HepG2 (cell line): ENCODE measurements at regions of chr11 and their contacts with region 1.

Region 1: DNA sequence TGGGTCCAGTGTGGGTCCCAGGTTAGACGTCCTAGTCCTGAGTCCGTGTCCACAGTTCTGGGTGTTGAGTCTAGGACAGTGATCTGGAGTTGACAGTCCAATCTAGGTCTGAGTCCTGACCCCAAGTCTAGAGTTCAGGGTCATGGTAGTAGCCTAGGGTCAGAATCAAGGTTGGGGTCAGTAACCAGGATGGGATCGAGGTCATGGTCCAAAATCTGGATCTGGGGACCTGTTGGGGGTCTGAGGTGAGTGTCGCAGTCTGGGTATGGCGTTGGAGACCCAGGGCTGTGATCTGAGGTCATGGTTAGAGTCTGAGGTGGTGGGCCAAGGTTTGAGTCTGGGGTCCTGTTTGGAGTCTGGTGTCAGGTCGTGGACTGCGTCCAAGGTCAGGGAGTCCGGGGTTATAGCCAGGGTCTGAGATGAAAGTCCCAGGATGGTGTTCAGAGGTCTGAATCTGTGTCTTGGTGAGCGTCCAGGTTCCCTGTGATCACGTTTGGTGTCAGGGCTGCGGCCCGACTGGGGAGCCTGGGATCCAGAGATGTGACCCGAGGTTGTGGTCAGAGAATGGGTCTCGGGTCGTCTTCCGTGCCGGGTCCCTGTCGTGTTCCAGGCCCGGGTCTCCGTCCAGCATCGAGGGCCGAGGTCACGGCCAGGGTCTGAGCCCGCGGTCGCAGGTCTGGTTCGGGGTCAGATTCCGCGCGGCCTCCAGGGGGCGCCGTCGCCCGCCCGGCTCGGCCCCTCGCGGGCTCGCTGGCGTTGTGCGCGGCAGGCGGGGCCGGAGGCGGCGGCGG is 445 bp upstream of the GRK2 start:
- DNase-seq: peak; percentile 44
- ATAC-seq: peak; percentile 51
- H3K4me3 ChIP-seq: peak overlapping the region; percentile 43 to 65 (median 49); a peak in 5 of 6 replicates
- H3K27ac ChIP-seq: no peak overlapping the region
- H3K4me1 ChIP-seq: peaks cover 73% of the 10 kb centered on the region
- H3K27me3 ChIP-seq: no peaks in the 10 kb centered on the region
- CTCF ChIP-seq: peak; percentile 83
- EP300 ChIP-seq: no peak
- POLR2A ChIP-seq: no peak
- RAD21 ChIP-seq: peak; percentile 82

Region 2: GRCh38 chr11:66815646-66816045 is 450.2 kb before region 1 on chr11:
- CTCF ChIA-PET with region 1: no interaction called
- POLR2A ChIA-PET with region 1: no interaction called
- in situ Hi-C with region 1: no loop called
- intact Hi-C with region 1: no loop called
- DNase-seq: no peak
- ATAC-seq: no peak
- H3K4me3 ChIP-seq: no peak overlapping the region
- H3K27ac ChIP-seq: no peak overlapping the region
- H3K4me1 ChIP-seq: no peaks in the 10 kb centered on the region
- H3K27me3 ChIP-seq: no peaks in the 10 kb centered on the region
- CTCF ChIP-seq: no peak
- EP300 ChIP-seq: no peak
- POLR2A ChIP-seq: no peak
- RAD21 ChIP-seq: no peak

Region 3: DNA sequence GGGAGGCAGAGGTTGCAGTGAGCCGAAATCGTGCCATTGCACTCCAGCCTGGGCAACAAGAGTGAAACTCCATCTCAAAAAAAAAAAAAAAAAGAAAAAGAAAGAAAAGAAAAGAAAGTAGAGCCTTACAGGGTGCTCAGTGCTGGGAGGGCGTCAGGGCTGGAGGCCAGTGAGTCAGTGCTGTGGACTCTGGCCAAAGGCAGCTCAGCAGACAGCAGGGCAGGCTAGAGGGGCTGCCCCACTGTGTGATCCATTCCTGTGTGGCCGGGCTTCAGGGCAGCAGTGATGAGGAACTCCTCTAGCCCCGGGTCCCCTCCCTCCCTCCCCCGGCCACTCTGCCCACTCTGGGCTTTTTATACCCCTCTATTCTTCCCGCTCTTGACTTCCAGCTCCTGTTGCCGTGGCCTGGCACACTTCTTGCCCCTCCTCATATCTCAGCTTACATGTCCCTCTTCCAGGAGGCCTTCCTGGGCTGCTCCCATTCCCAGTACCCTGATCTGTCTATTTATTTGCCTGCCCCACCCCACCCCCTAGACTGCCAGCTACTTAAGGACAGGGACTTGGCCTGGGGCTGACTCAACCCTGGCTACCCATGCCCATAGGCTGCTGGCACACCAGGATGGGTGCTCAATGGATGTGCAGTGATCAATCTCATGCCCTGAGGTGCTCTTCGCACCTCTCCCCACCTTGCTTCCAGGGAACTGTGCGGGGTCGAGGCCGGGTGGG is 232.8 kb before region 1 on chr11:
- CTCF ChIA-PET with region 1: no interaction called
- POLR2A ChIA-PET with region 1: no interaction called
- in situ Hi-C with region 1: no loop called
- intact Hi-C with region 1: no loop called
- DNase-seq: no peak
- ATAC-seq: peak; percentile 80
- H3K4me3 ChIP-seq: no peak overlapping the region
- H3K27ac ChIP-seq: no peak overlapping the region
- H3K4me1 ChIP-seq: no peaks in the 10 kb centered on the region
- H3K27me3 ChIP-seq: peaks cover 0 to 28% of the 10 kb centered on the region in 2 experiments; a peak in 4 of 5 replicates
- CTCF ChIP-seq: no peak
- EP300 ChIP-seq: no peak
- POLR2A ChIP-seq: no peak
- RAD21 ChIP-seq: no peak

Region 4: DNA sequence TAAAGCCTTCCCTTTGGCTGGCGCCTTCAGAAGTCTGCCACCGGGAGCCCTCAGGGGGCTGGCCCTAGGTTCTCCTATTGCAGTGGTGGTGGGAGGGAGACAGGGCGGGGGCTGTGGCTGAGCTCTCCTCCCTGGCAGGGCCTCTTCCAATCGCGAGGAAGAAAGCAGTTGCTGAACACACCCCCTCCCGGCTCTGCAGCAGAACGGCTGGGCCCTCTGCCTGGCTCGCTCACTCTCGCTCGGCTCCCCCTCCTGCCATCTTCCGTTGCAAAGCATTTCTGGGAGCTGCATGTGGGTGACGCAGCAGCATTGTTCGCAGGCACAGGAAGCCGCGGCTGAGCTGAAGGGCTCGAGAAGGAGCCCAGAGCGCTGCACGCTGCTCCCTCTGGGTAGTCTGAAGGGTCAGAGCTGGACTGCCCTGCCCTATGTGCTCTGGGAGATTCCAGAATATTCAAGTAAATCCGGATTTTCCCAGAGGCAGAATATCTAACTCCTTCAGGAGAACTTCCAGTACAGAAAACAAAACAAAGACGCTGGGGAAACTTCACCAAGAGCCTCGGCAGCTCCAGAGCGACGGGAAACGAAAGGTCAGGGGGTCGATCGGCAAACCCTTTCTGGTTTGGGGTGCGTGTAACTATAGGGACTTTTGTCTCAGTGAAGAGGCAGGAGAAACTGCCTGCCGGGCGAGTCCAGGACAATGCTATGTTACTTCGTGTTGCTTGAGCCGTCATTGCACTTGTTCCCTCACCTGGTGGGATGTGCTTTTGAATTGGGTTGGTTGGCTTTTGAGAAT is 25.8 kb before region 1 on chr11:
- CTCF ChIA-PET with region 1: no interaction called
- POLR2A ChIA-PET with region 1: interaction called, 13 read pairs
- in situ Hi-C with region 1: no loop called
- intact Hi-C with region 1: no loop called
- DNase-seq: peak; percentile 96
- ATAC-seq: peak; percentile 97
- H3K4me3 ChIP-seq: peak overlapping the region; percentile 72 to 82 (median 80)
- H3K27ac ChIP-seq: peak overlapping the region; percentile 89
- H3K4me1 ChIP-seq: peaks cover 41% of the 10 kb centered on the region
- H3K27me3 ChIP-seq: no peaks in the 10 kb centered on the region; a peak in 1 of 5 replicates
- CTCF ChIP-seq: peak; percentile 41
- EP300 ChIP-seq: 0 out of 4 replicates have a peak, but pooled peaks of 1 of the 2 experiments have one; percentile 11
- POLR2A ChIP-seq: peak; percentile 96 to 97
- RAD21 ChIP-seq: peak; percentile 62

Region 5: GRCh38 chr11:67288452-67289225 is 22.8 kb after region 1 on chr11:
- CTCF ChIA-PET with region 1: interaction called, 5 read pairs
- POLR2A ChIA-PET with region 1: interaction called, 19 read pairs
- in situ Hi-C with region 1: no loop called
- intact Hi-C with region 1: loop called (anchors 1 kb)
- DNase-seq: peak; percentile 85
- ATAC-seq: peak; percentile 80
- H3K4me3 ChIP-seq: peak overlapping the region; percentile 69 to 94 (median 91)
- H3K27ac ChIP-seq: peak overlapping the region; percentile 100
- H3K4me1 ChIP-seq: peaks cover 37% of the 10 kb centered on the region
- H3K27me3 ChIP-seq: no peaks in the 10 kb centered on the region
- CTCF ChIP-seq: peak; percentile 74
- EP300 ChIP-seq: peak in 1 of 2 experiments; percentile 67; a peak in 2 of 4 replicates
- POLR2A ChIP-seq: peak in 1 of 2 experiments; percentile 88; a peak in 2 of 4 replicates
- RAD21 ChIP-seq: peak; percentile 88

Region 6: DNA sequence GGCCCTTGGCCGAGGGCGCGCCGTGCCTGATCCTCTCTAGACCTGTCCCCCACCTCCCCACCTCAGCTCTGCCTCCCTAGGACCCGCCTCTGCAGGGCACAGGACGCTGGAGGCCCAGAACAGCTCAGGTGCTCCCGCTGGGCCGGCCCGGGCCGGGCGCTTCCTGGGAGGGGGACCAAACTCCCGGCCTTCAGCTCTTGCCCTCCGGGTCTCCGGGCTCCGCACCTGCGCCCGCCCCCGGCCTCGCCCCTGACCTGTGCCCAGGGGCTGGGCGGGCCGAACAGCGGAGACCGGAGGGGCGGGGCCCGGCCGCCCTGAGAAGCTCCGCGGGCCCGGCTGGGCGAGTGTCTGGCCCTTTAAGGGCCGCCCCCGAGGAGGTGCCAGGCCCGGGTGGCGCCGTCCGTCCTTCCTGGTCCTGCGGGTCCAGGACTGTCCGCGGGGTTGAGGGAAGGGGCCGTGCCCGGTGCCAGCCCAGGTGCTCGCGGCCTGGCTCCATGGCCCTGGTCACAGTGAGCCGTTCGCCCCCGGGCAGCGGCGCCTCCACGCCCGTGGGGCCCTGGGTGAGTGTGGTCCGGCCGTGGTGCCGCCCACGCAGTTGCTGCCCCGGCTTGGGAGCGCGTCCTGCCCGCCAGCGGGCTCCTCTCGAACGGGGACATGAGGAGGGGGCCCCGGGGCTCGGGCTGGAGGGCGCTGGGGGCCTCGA is 37.5 kb after region 1 on chr11 and contains the start of gene SSH3:
- CTCF ChIA-PET with region 1: no interaction called
- POLR2A ChIA-PET with region 1: interaction called, 6 read pairs
- in situ Hi-C with region 1: no loop called
- intact Hi-C with region 1: loop called (anchors 5 kb)
- DNase-seq: peak; percentile 56
- ATAC-seq: peak; percentile 86
- H3K4me3 ChIP-seq: peak within 1 kb of the TSS; percentile 89 to 98 (median 90)
- H3K27ac ChIP-seq: peak within 1 kb of the TSS; percentile 61
- H3K4me1 ChIP-seq: peaks cover 20% of the 10 kb centered on the region
- H3K27me3 ChIP-seq: no peaks in the 10 kb centered on the region
- CTCF ChIP-seq: 0 out of 2 replicates have a peak, but pooled peaks have one; percentile 5
- EP300 ChIP-seq: no peak
- POLR2A ChIP-seq: peak in 1 of 2 experiments; percentile 69; a peak in 2 of 4 replicates
- RAD21 ChIP-seq: no peak; the same call in 1 of the 2 replicates
- total RNA-seq, gene SSH3: 7.5 and 12.4 TPM in 2 replicates

Region 7: GRCh38 chr11:67382276-67383136 is 116.7 kb after region 1 on chr11:
- CTCF ChIA-PET with region 1: no interaction called
- POLR2A ChIA-PET with region 1: no interaction called
- in situ Hi-C with region 1: loop called (anchors 5 kb)
- intact Hi-C with region 1: no loop called
- DNase-seq: peak; percentile 67
- ATAC-seq: peak; percentile 86
- H3K4me3 ChIP-seq: no peak overlapping the region
- H3K27ac ChIP-seq: no peak overlapping the region
- H3K4me1 ChIP-seq: peaks cover 30% of the 10 kb centered on the region
- H3K27me3 ChIP-seq: peaks cover 1 to 40% of the 10 kb centered on the region in 2 experiments; a peak in 3 of 5 replicates
- CTCF ChIP-seq: peak; percentile 97
- EP300 ChIP-seq: no peak
- POLR2A ChIP-seq: no peak
- RAD21 ChIP-seq: peak; percentile 92